ENCODE measurements at regions of chr2 and their contacts with region 1.

Region 1: DNA sequence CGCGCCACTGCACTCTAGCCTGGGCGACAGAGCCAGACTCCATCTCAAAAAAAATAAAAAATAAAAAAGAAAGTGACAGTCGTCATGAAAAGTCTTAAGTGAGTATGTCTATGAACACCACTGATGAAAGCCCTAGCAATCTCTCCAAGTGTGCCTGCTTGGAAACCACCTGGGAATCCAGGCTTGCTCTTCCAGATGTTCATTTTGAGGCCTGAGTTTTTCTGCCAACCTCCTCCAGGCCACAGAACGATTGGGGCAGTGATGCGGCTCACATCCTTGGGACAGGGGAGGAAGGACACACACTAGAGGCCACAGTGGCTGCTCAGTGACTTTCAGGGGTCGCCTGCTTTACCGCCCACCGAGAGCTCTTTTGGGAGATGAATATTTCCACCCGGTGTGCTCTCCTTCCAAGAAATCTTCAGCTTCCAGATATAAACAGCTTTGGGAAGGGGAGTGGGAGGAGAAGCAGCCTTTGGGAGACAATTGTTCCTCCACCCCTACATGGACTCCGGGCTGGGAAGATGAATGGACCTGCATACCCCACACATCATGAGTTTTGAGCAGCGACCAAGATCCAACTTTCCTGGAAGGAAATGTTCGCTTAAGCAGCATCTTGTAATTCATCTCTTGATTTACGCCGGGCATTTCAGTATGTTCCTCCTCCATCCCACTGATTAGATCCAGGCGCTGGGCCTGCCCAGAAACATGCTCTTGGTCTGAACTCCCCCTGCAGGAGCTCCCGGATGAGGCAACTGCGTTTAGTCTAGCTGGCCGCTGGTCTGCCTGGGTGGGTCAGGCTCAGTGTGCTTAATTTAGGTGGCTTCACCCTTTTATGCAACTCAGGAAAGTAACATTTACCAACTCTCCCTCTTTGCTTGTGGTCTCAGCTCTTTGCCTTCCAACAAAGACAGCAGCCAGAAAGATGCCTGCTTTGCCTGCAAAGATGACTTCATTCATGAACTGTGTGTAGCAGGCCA is 6.2 kb upstream of the ARMC9 start:
- DNase-seq: peak; percentile 67
- H3K4me3 ChIP-seq: no peak overlapping the region
- H3K27ac ChIP-seq: peak overlapping the region; percentile 65 to 90 (median 84)
- H3K4me1 ChIP-seq: peaks cover 0 to 22% (median 16%) of the 10 kb centered on the region in 4 donors
- H3K27me3 ChIP-seq: no peaks in the 10 kb centered on the region
- CTCF ChIP-seq: peak; percentile 45 to 73 (median 50)
- EP300 ChIP-seq: peak; percentile 87
- POLR2A ChIP-seq: no peak

Region 2: DNA sequence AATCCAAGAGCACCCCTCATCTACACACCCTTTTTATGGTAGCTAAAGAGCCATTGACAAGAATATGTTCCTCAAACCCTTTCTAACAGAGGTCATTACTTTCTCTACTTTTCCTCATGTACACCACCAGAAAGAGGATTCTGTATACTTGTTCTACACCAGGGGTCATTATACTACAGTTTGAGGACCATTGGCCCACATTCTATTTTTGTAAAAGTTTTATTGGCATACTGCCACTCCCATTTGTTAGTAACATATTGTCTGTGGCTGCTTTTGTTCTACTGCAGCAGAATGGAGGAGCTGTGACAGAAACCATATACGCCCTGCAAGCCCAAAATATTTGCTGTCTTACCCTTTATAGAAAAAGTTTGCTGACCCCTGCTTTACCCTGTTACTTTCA is 81.6 kb before region 1 on chr2:
- in situ Hi-C with region 1: loop called in 2 of 4 experiments (anchors 5 to 10 kb)
- intact Hi-C with region 1: loop called (anchors 5 kb)
- DNase-seq: no peak
- H3K4me3 ChIP-seq: no peak overlapping the region
- H3K27ac ChIP-seq: peak overlapping the region; percentile 7 to 56 (median 40)
- H3K4me1 ChIP-seq: peaks cover 10 to 25% (median 16%) of the 10 kb centered on the region in 4 donors
- H3K27me3 ChIP-seq: no peaks in the 10 kb centered on the region
- CTCF ChIP-seq: peak in 3 of 5 experiments; percentile 13 to 32 (median 18)
- EP300 ChIP-seq: no peak
- POLR2A ChIP-seq: no peak

Region 3: DNA sequence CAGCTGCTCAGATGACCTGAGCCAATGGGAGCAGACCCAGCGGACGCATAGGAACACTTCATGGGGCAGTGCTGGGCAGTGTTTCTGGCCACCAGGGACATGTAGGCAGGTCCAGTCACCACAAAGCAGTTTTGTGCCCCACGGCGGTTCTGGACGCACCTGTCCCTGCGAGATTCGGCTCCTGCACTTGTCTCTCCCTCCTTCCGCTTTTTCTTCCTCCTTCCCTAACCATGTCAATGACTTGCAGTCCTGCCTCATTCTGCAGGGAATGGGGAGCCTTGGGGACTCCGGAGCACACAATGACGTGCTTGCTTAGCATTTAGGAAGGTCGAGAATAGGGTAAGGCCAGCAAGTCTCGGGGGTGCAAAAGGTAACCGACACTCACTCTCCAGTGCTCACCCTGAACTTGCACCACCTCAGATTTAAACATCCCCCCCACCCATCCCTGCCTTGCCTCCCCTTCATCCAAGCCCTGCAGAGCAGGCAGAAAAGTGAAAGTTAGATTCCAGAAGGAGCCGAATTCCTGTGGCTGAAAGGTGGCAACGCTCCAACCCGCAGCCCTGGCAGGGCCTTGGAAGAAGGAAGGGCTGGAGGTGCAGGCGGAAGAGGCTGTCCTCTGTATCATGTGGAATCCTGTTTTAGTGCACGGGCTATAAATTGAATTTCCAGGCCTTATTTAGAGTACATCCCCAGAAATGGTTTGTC is 2018.8 kb after region 1 on chr2:
- in situ Hi-C with region 1: no loop called
- intact Hi-C with region 1: no loop called
- DNase-seq: peak; percentile 63
- H3K4me3 ChIP-seq: no peak overlapping the region
- H3K27ac ChIP-seq: peak overlapping the region in 2 of 4 donors; percentile 10 to 36
- H3K4me1 ChIP-seq: peaks cover 0 to 16% (median 4%) of the 10 kb centered on the region in 4 donors
- H3K27me3 ChIP-seq: no peaks in the 10 kb centered on the region
- CTCF ChIP-seq: no peak
- EP300 ChIP-seq: no peak
- POLR2A ChIP-seq: no peak